ENCODE measurements at regions of chr10 and their contacts with region 1.

Region 1: DNA sequence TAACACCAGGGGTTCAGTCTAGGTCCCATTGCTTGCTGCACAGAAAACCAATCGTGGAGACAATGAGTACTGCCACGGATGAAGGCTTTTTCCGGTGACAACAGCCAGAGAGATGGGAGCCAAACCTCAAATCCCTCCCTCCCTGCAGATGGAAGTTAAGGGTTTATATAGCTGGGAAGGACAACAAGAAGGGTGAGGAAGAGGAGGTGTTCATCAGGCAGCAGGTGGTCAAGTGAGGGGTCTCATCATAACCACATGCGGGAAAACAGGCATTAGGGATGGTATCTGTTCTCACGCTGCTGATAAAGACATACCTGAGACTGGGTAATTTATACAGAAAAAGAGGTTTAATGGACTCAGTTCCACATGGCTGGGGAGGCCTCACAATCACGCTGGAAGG is 91.3 kb downstream of the MKX start:
- DNase-seq: no peak
- H3K4me3 ChIP-seq: no peak overlapping the region
- H3K4me3 Mint-ChIP-seq: no peak overlapping the region
- H3K27ac ChIP-seq: no peak overlapping the region
- H3K27ac Mint-ChIP-seq: peak overlapping the region in 3 of 7 donors; percentile 40 to 72 (median 46)
- H3K4me1 ChIP-seq: peaks cover 0 to 18% of the 10 kb centered on the region in 2 donors
- H3K4me1 Mint-ChIP-seq: peaks cover 26% of the 10 kb centered on the region
- H3K27me3 ChIP-seq: no peaks in the 10 kb centered on the region
- H3K27me3 Mint-ChIP-seq: peaks cover 0 to 8% (median 5%) of the 10 kb centered on the region in 3 donors
- CTCF ChIP-seq: no peak

Region 2: DNA sequence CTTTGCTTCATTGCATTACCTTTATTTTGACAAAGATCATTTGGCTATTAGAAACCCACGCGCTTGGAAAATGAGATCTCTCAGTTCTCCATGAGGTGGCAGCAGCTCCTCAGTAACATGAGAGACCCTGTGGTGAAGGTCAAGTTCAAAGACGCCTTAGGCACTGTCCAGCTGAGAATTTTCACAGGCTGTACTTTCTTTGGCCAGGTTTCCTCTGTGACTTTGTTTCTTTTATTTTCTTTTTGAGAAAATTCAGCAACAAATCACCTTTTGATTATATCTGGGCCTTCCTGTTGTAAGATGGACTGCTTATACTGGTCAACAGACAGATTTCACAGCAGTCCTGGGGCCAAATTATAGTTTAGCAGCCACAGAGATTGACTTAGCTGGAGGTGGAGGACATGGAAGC is 95.7 kb before region 1 on chr10:
- intact Hi-C with region 1: loop called (anchors 5 kb)
- DNase-seq: peak; percentile 46 to 66 (median 59)
- H3K4me3 ChIP-seq: no peak overlapping the region
- H3K4me3 Mint-ChIP-seq: no peak overlapping the region
- H3K27ac ChIP-seq: no peak overlapping the region
- H3K27ac Mint-ChIP-seq: peak overlapping the region in 1 of 7 donors; percentile 7
- H3K4me1 ChIP-seq: no peaks in the 10 kb centered on the region
- H3K4me1 Mint-ChIP-seq: no peaks in the 10 kb centered on the region
- H3K27me3 ChIP-seq: no peaks in the 10 kb centered on the region
- H3K27me3 Mint-ChIP-seq: peaks cover 0 to 5% (median 0%) of the 10 kb centered on the region in 3 donors
- CTCF ChIP-seq: peak; percentile 76

Region 3: DNA sequence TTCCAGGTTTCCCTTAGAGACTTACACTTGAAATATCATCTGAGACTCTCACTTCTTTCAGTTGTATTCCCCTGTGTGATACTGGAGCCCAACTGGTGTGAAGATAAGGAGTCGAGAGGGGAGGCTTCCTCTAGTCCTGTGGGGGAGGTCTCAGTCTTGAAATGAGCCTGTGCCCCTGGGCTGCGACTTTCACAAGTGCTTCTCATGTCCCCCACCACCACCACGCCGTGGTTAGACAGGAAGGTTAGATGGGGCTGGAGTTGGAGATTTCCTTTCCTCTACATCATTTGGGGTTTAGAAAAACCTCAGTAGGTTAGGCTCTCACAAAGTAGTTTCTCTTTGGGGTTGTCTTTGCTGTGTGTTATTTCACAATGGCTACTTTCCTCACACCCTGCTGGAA is 116.9 kb after region 1 on chr10:
- intact Hi-C with region 1: no loop called
- DNase-seq: no peak
- H3K4me3 ChIP-seq: no peak overlapping the region
- H3K4me3 Mint-ChIP-seq: no peak overlapping the region
- H3K27ac ChIP-seq: no peak overlapping the region
- H3K27ac Mint-ChIP-seq: peak overlapping the region in 1 of 7 donors; percentile 16
- H3K4me1 ChIP-seq: no peaks in the 10 kb centered on the region
- H3K4me1 Mint-ChIP-seq: peaks cover 15% of the 10 kb centered on the region
- H3K27me3 ChIP-seq: peaks cover 0 to 3% of the 10 kb centered on the region in 2 donors
- H3K27me3 Mint-ChIP-seq: peaks cover 9 to 11% (median 10%) of the 10 kb centered on the region in 3 donors
- CTCF ChIP-seq: no peak

Region 4: GRCh38 chr10:27865221-27865638 is 210.9 kb after region 1 on chr10:
- intact Hi-C with region 1: no loop called
- DNase-seq: no peak
- H3K4me3 ChIP-seq: no peak overlapping the region
- H3K4me3 Mint-ChIP-seq: no peak overlapping the region
- H3K27ac ChIP-seq: no peak overlapping the region
- H3K27ac Mint-ChIP-seq: no peak overlapping the region
- H3K4me1 ChIP-seq: no peaks in the 10 kb centered on the region
- H3K4me1 Mint-ChIP-seq: no peaks in the 10 kb centered on the region
- H3K27me3 ChIP-seq: no peaks in the 10 kb centered on the region
- H3K27me3 Mint-ChIP-seq: no peaks in the 10 kb centered on the region
- CTCF ChIP-seq: no peak